ENCODE measurements at regions of chr10 and their contacts with region 1.

Region 1: GRCh38 chr10:102917962-102918816 is at the start of gene CNNM2:
- DNase-seq: peak; percentile 100
- H3K4me3 ChIP-seq: peak within 1 kb of the TSS; percentile 91
- H3K27ac ChIP-seq: peak within 1 kb of the TSS; percentile 76
- H3K27me3 ChIP-seq: no peaks in the 10 kb centered on the region
- CTCF ChIP-seq: no peak

Region 2: DNA sequence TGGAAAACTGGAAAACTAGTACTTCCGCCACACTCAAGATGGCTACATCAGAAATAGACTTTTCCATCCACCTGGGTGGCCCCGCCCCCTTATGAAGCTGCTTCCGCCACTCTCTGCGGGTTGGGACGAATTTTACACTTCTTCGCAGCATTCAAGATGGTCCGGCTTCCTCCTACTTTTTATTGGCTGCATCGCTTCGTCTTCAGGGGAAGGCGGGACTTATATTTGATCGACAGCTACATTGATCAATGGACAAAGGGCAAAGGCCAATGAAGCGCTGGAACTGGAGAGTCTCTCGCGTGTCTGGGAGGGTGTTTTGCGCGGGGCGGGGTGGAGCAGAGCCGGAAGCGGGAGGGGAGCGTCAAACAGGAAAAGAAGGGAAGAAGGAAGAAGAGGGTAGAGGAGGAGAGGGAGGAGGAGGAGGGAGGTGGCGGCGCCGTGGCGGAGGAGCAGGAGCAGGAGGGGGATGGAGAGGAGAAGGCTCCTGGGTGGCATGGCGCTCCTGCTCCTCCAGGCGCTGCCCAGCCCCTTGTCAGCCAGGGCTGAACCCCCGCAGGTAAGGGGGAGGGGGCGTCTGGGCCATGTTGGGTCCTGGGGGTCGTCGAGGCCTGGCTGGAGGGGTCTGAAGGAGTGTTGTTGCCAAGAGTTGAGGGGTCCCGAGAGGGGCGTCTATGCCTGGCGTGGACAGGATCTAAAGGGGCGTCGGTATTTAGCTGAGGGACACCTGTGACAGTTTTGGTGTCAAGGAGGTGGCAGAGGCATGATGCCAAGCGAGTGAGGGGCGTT is 174.4 kb before region 1 on chr10 and contains the start of gene WBP1L:
- in situ Hi-C with region 1: loop called (anchors 25 kb)
- DNase-seq: peak; percentile 99
- H3K4me3 ChIP-seq: peak within 1 kb of the TSS; percentile 96
- H3K27ac ChIP-seq: peak within 1 kb of the TSS; percentile 60
- H3K27me3 ChIP-seq: no peaks in the 10 kb centered on the region
- CTCF ChIP-seq: no peak

Region 3: DNA sequence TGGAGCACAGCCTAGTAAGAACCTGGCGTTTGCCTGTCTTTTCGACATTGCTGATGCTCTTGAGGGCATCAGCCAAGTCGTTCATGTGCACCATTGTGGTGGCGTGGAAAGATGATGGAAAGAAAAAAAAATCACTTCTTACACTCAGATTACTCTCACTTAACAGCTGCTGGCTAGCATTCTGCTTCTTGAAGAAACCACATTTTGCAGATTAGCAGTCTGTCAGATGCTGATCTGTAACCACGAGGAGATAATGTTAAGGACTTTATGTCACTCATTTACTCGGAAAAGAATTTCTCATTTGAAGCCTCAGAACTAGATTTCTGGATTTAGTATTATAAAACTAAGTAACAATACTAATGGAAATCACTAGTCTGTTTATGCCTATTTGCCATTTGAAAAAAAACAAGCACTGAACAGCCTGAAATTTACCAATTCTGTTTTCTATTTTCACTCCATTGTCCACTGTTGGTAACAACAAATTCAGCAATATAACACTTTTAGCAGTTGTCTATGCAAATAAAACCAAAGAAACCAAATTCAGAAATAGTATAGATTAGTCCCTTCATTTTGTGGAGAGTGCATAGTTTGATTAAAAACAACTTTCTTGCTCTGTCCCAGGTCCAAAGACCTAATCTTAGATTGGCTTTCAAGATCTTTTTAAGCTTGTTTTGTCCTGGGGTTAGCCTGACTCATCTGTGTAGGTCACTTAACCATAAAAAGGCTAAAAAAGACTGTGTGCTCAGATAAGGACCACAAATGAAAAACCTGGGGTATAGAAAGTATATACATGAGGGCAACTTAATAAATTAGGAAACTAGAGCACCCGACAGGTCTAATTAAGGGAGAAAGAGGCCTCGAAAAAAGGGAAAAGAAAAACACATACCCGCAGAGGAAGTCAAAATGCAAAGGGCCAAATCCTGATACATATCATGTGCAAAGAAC is 207.4 kb after region 1 on chr10:
- in situ Hi-C with region 1: no loop called
- DNase-seq: peak; percentile 38
- H3K4me3 ChIP-seq: no peak overlapping the region
- H3K27ac ChIP-seq: no peak overlapping the region
- H3K27me3 ChIP-seq: no peaks in the 10 kb centered on the region
- CTCF ChIP-seq: no peak

Region 4: DNA sequence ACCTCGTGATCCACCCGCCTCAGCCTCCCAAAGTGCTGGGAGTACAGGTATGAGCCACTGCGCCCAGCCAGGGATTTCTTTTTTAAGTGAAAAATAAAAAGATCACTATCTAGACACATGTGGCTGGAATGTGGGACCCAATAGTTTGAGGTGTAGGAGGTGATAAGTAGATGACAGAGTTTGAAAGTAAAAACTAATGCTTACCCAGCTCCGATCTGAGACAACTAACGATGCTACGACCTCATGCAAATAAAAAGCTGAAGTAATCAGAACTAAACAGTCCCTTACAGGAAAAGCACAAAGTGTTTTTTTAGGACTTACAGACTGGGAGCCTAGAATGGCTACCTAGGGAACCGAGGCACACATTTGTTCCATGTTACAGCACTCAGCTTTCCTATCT is 409.7 kb after region 1 on chr10:
- in situ Hi-C with region 1: no loop called
- DNase-seq: no peak
- H3K4me3 ChIP-seq: no peak overlapping the region
- H3K27ac ChIP-seq: no peak overlapping the region
- H3K27me3 ChIP-seq: no peaks in the 10 kb centered on the region
- CTCF ChIP-seq: no peak

Measured in brain microvascular endothelial cell (primary cell).